ENCODE measurements at regions of chr21 and their contacts with region 1.

Region 1: GRCh38 chr21:27700974-27701614 is 734.2 kb upstream of the ADAMTS5 start:
- DNase-seq: peak; percentile 88
- H3K4me3 Mint-ChIP-seq: no peak overlapping the region
- H3K27ac Mint-ChIP-seq: no peak overlapping the region
- H3K4me1 Mint-ChIP-seq: no peaks in the 10 kb centered on the region
- H3K27me3 Mint-ChIP-seq: no peaks in the 10 kb centered on the region
- CTCF ChIP-seq: peak; percentile 89

Region 2: GRCh38 chr21:26842976-26843932 is 857.8 kb before region 1 on chr21:
- CTCF ChIA-PET with region 1: interaction called, 48 read pairs
- POLR2A ChIA-PET with region 1: interaction called, 3 read pairs
- intact Hi-C with region 1: no loop called
- DNase-seq: peak; percentile 95
- H3K4me3 Mint-ChIP-seq: peak overlapping the region; percentile 76
- H3K27ac Mint-ChIP-seq: peak overlapping the region; percentile 38
- H3K4me1 Mint-ChIP-seq: peaks cover 38% of the 10 kb centered on the region
- H3K27me3 Mint-ChIP-seq: peaks cover 29% of the 10 kb centered on the region
- CTCF ChIP-seq: peak; percentile 17

Region 3: GRCh38 chr21:26967062-26967913 is 733.8 kb before region 1 on chr21 and contains the start of gene ADAMTS5:
- CTCF ChIA-PET with region 1: interaction called, 3 read pairs
- POLR2A ChIA-PET with region 1: no interaction called
- intact Hi-C with region 1: loop called (anchors 10 kb)
- DNase-seq: peak; percentile 68
- H3K4me3 Mint-ChIP-seq: peak within 1 kb of the TSS; percentile 92
- H3K27ac Mint-ChIP-seq: peak within 1 kb of the TSS; percentile 88
- H3K4me1 Mint-ChIP-seq: peaks cover 10% of the 10 kb centered on the region
- H3K27me3 Mint-ChIP-seq: no peaks in the 10 kb centered on the region
- CTCF ChIP-seq: no peak
- total RNA-seq, gene ADAMTS5: 0.10 TPM in 1 of 2 replicates, not detected in the other

Region 4: DNA sequence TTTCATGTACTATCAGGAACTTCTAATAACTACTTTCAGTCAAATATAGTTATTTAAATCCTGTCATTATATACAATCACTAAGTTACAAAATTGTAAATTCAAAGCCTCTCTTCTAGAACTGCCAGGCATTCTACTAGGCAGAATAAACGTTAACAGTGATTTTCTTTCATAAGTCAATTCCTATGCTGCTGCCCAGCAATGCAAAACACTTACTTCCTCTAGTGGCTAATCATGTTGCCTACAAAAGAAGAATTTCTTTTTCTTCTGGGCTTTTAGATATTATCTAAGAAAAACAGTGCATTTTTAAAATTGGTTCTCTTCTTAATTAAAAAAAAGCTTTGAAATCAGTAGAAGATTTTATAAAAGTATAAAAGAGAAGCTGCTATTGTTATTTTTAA is 224.4 kb before region 1 on chr21:
- CTCF ChIA-PET with region 1: no interaction called
- POLR2A ChIA-PET with region 1: no interaction called
- intact Hi-C with region 1: loop called (anchors 1 kb)
- DNase-seq: peak; percentile 5
- H3K4me3 Mint-ChIP-seq: no peak overlapping the region
- H3K27ac Mint-ChIP-seq: no peak overlapping the region
- H3K4me1 Mint-ChIP-seq: peaks cover 10% of the 10 kb centered on the region
- H3K27me3 Mint-ChIP-seq: no peaks in the 10 kb centered on the region
- CTCF ChIP-seq: peak; percentile 22

Region 5: GRCh38 chr21:27570306-27570868 is 130.7 kb before region 1 on chr21:
- CTCF ChIA-PET with region 1: interaction called, 23 read pairs
- POLR2A ChIA-PET with region 1: interaction called, 5 read pairs
- intact Hi-C with region 1: loop called (anchors 2 kb)
- DNase-seq: peak; percentile 83
- H3K4me3 Mint-ChIP-seq: no peak overlapping the region
- H3K27ac Mint-ChIP-seq: peak overlapping the region; percentile 85
- H3K4me1 Mint-ChIP-seq: peaks cover 37% of the 10 kb centered on the region
- H3K27me3 Mint-ChIP-seq: no peaks in the 10 kb centered on the region
- CTCF ChIP-seq: no peak

Region 6: GRCh38 chr21:27622631-27623030 is 78.5 kb before region 1 on chr21:
- CTCF ChIA-PET with region 1: no interaction called
- POLR2A ChIA-PET with region 1: no interaction called
- intact Hi-C with region 1: no loop called
- DNase-seq: no peak
- H3K4me3 Mint-ChIP-seq: no peak overlapping the region
- H3K27ac Mint-ChIP-seq: no peak overlapping the region
- H3K4me1 Mint-ChIP-seq: no peaks in the 10 kb centered on the region
- H3K27me3 Mint-ChIP-seq: no peaks in the 10 kb centered on the region
- CTCF ChIP-seq: no peak

Region 7: DNA sequence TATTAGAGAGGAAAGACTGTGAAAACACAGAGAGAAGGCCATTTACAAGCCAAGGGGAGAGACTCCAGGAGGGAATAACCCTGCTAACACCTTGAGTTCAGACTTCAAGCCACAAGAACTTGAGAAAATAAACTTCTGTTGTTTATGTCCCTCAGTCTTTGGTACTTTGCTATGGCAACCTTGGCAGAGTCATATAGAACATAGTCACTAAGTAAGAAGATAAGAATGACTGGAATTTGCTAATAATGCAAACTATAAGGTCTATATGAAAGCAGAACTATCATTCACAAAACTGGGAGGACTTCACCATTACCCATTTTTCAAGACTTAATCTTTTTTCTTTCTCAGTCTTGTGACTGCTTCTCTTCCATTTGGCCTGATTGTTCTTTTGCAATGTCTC is 33.1 kb after region 1 on chr21:
- CTCF ChIA-PET with region 1: no interaction called
- POLR2A ChIA-PET with region 1: no interaction called
- intact Hi-C with region 1: no loop called
- DNase-seq: no peak
- H3K4me3 Mint-ChIP-seq: no peak overlapping the region
- H3K27ac Mint-ChIP-seq: no peak overlapping the region
- H3K4me1 Mint-ChIP-seq: peaks cover 10% of the 10 kb centered on the region
- H3K27me3 Mint-ChIP-seq: no peaks in the 10 kb centered on the region
- CTCF ChIP-seq: no peak

Region 8: GRCh38 chr21:28875078-28875477 is 1174.0 kb after region 1 on chr21:
- CTCF ChIA-PET with region 1: no interaction called
- POLR2A ChIA-PET with region 1: no interaction called
- intact Hi-C with region 1: no loop called
- DNase-seq: no peak
- H3K4me3 Mint-ChIP-seq: no peak overlapping the region
- H3K27ac Mint-ChIP-seq: no peak overlapping the region
- H3K4me1 Mint-ChIP-seq: peaks cover 10% of the 10 kb centered on the region
- H3K27me3 Mint-ChIP-seq: no peaks in the 10 kb centered on the region
- CTCF ChIP-seq: no peak

Measured in MCF 10A (cell line).